ENCODE measurements at regions of chr6 and their contacts with region 1.

Region 1: GRCh38 chr6:88890860-88891845 is 72.3 kb downstream of the RNGTT start:
- DNase-seq: no peak
- ATAC-seq: no peak
- H3K4me3 ChIP-seq: no peak overlapping the region
- H3K4me3 Mint-ChIP-seq: no peak overlapping the region
- H3K27ac ChIP-seq: no peak overlapping the region
- H3K27ac Mint-ChIP-seq: peak overlapping the region in 1 of 2 donors; percentile 40
- H3K4me1 ChIP-seq: no peaks in the 10 kb centered on the region
- H3K4me1 Mint-ChIP-seq: no peaks in the 10 kb centered on the region
- H3K27me3 ChIP-seq: no peaks in the 10 kb centered on the region
- H3K27me3 Mint-ChIP-seq: no peaks in the 10 kb centered on the region

Region 2: GRCh38 chr6:87645080-87645479 is 1246.1 kb before region 1 on chr6:
- CTCF ChIA-PET with region 1: interaction called in 1 of 2 experiments, 15 read pairs
- POLR2A ChIA-PET with region 1: no interaction called
- DNase-seq: peak in 2 of 35 experiments; percentile 1 to 29
- ATAC-seq: peak in 3 of 4 experiments; percentile 40 to 54 (median 53)
- H3K4me3 ChIP-seq: peak overlapping the region in 1 of 2 donors; percentile 16
- H3K4me3 Mint-ChIP-seq: peak overlapping the region; percentile 57 to 76 (median 71)
- H3K27ac ChIP-seq: peak overlapping the region; percentile 37
- H3K27ac Mint-ChIP-seq: peak overlapping the region; percentile 81 to 82
- H3K4me1 ChIP-seq: peaks cover 3 to 5% of the 10 kb centered on the region in 2 experiments
- H3K4me1 Mint-ChIP-seq: peaks cover 0 to 19% (median 15%) of the 10 kb centered on the region in 3 donors
- H3K27me3 ChIP-seq: no peaks in the 10 kb centered on the region
- H3K27me3 Mint-ChIP-seq: no peaks in the 10 kb centered on the region

Region 3: GRCh38 chr6:88321306-88321705 is 569.8 kb before region 1 on chr6:
- CTCF ChIA-PET with region 1: no interaction called
- POLR2A ChIA-PET with region 1: no interaction called
- DNase-seq: no peak
- ATAC-seq: no peak
- H3K4me3 ChIP-seq: no peak overlapping the region
- H3K4me3 Mint-ChIP-seq: no peak overlapping the region
- H3K27ac ChIP-seq: no peak overlapping the region
- H3K27ac Mint-ChIP-seq: no peak overlapping the region
- H3K4me1 ChIP-seq: no peaks in the 10 kb centered on the region
- H3K4me1 Mint-ChIP-seq: no peaks in the 10 kb centered on the region
- H3K27me3 ChIP-seq: peaks cover 0 to 2% of the 10 kb centered on the region in 2 experiments
- H3K27me3 Mint-ChIP-seq: peaks cover 20 to 37% of the 10 kb centered on the region in 2 donors

Region 4: GRCh38 chr6:88982720-88983119 is 91.6 kb after region 1 on chr6:
- CTCF ChIA-PET with region 1: no interaction called
- POLR2A ChIA-PET with region 1: no interaction called
- DNase-seq: peak in 3 of 35 experiments; percentile 8 to 78 (median 18)
- ATAC-seq: peak; percentile 72 to 89 (median 81)
- H3K4me3 ChIP-seq: no peak overlapping the region
- H3K4me3 Mint-ChIP-seq: no peak overlapping the region
- H3K27ac ChIP-seq: no peak overlapping the region
- H3K27ac Mint-ChIP-seq: no peak overlapping the region
- H3K4me1 ChIP-seq: no peaks in the 10 kb centered on the region
- H3K4me1 Mint-ChIP-seq: no peaks in the 10 kb centered on the region
- H3K27me3 ChIP-seq: no peaks in the 10 kb centered on the region
- H3K27me3 Mint-ChIP-seq: peaks cover 0 to 4% of the 10 kb centered on the region in 2 donors